CD4-positive, alpha-beta T cell (primary cell): ENCODE measurements at regions of chr1 and their contacts with region 1.

Region 1: DNA sequence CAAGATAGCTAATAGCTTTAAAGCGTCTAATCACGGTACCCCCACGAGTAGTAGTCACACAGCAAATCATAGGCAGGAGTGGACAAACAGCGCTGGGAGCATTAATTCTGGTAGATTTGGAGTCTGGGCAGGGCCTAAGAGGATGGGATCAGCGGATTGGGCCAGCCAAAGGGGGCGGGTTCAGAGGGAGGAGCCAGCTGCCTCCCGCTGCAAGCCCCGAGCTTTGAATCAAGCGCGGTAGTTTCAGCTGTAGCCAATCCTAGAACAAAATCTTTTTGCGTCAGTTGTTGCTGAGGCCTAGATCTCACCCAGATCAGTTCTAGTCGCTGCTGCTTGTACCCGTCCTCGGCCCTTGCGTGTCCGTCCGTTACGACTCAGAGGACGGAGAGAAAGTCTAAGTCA is 576 bp upstream of the NASP start:
- DNase-seq: peak; percentile 88 to 98 (median 92)
- ATAC-seq: peak; percentile 74
- H3K4me3 ChIP-seq: peak overlapping the region; percentile 95
- H3K4me3 Mint-ChIP-seq: peak overlapping the region; percentile 94
- H3K27ac ChIP-seq: peak overlapping the region; percentile 94 to 95
- H3K27ac Mint-ChIP-seq: peak overlapping the region; percentile 93
- H3K4me1 ChIP-seq: peaks cover 36% of the 10 kb centered on the region
- H3K4me1 Mint-ChIP-seq: peaks cover 36% of the 10 kb centered on the region
- H3K27me3 ChIP-seq: no peaks in the 10 kb centered on the region
- H3K27me3 Mint-ChIP-seq: no peaks in the 10 kb centered on the region
- CTCF ChIP-seq: no peak

Region 2: GRCh38 chr1:44714944-44715571 is 868.2 kb before region 1 on chr1:
- CTCF ChIA-PET with region 1: no interaction called
- POLR2A ChIA-PET with region 1: no interaction called
- intact Hi-C with region 1: loop called in 1 of 2 experiments (anchors 10 kb)
- DNase-seq: peak; percentile 48 to 88 (median 56)
- ATAC-seq: peak; percentile 93
- H3K4me3 ChIP-seq: peak overlapping the region; percentile 20
- H3K4me3 Mint-ChIP-seq: peak overlapping the region; percentile 69
- H3K27ac ChIP-seq: no peak overlapping the region
- H3K27ac Mint-ChIP-seq: peak overlapping the region; percentile 78
- H3K4me1 ChIP-seq: peaks cover 44% of the 10 kb centered on the region
- H3K4me1 Mint-ChIP-seq: peaks cover 44% of the 10 kb centered on the region
- H3K27me3 ChIP-seq: no peaks in the 10 kb centered on the region
- H3K27me3 Mint-ChIP-seq: no peaks in the 10 kb centered on the region
- CTCF ChIP-seq: peak; percentile 98

Region 3: DNA sequence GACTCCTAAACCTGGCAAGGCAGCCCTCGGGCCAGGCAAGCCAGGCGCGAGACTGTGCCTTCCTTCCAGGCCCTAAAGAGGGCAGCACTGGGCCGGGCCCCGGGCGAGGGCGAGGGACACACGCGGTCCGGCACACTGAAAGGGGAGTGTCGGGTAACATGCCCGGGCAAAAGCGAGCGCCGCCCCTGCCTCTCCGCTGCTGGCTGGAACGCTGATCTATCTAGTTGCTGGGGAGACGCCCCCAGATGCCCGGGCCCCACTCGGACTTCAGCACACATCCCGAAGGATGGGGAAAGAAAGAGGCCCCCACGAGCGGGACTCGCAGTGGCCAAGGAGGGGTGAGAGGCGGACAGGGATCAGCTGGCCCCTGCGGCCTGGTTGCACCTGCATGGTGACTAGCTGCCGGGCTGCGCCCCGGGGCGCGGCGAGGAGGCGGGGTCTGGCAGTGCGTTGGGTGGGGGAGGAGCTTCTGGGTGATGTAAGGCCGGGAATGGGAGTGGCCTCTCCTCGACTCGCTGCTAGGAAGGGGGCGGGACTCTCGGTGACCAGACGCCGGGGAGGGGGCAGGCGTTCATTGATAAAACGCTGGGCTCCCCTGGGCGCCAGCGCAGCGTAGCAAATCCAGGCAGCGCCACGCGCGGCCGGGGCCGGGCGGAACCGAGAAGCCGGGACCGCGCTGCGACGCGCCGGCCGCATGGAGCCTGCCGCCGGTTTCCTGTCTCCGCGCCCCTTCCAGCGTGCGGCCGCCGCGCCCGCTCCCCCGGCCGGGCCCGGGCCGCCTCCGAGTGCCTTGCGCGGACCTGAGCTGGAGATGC is 783.3 kb before region 1 on chr1 and contains the start of gene PLK3:
- CTCF ChIA-PET with region 1: no interaction called
- POLR2A ChIA-PET with region 1: interaction called, 4 read pairs
- intact Hi-C with region 1: loop called (anchors 10 kb)
- DNase-seq: peak; percentile 97 to 100 (median 98)
- ATAC-seq: peak; percentile 77
- H3K4me3 ChIP-seq: peak within 1 kb of the TSS; percentile 99
- H3K4me3 Mint-ChIP-seq: peak within 1 kb of the TSS; percentile 99
- H3K27ac ChIP-seq: peak within 1 kb of the TSS; percentile 88 to 98
- H3K27ac Mint-ChIP-seq: peak within 1 kb of the TSS; percentile 86
- H3K4me1 ChIP-seq: peaks cover 48% of the 10 kb centered on the region
- H3K4me1 Mint-ChIP-seq: peaks cover 39% of the 10 kb centered on the region
- H3K27me3 ChIP-seq: no peaks in the 10 kb centered on the region
- H3K27me3 Mint-ChIP-seq: no peaks in the 10 kb centered on the region
- CTCF ChIP-seq: peak; percentile 79
- total RNA-seq, gene PLK3: 794 TPM

Region 4: GRCh38 chr1:45499415-45499769 is 83.9 kb before region 1 on chr1:
- CTCF ChIA-PET with region 1: no interaction called
- POLR2A ChIA-PET with region 1: interaction called, 24 read pairs
- intact Hi-C with region 1: no loop called
- DNase-seq: peak in 1 of 14 experiments; percentile 23
- ATAC-seq: no peak
- H3K4me3 ChIP-seq: peak overlapping the region; percentile 80
- H3K4me3 Mint-ChIP-seq: peak overlapping the region; percentile 96
- H3K27ac ChIP-seq: peak overlapping the region; percentile 0 to 53
- H3K27ac Mint-ChIP-seq: peak overlapping the region; percentile 83
- H3K4me1 ChIP-seq: peaks cover 24% of the 10 kb centered on the region
- H3K4me1 Mint-ChIP-seq: peaks cover 36% of the 10 kb centered on the region
- H3K27me3 ChIP-seq: no peaks in the 10 kb centered on the region
- H3K27me3 Mint-ChIP-seq: no peaks in the 10 kb centered on the region
- CTCF ChIP-seq: no peak

Region 5: GRCh38 chr1:45550401-45551351 is 32.6 kb before region 1 on chr1 and contains the start of gene AKR1A1:
- CTCF ChIA-PET with region 1: no interaction called
- POLR2A ChIA-PET with region 1: interaction called, 15 read pairs
- intact Hi-C with region 1: loop called in 1 of 2 experiments (anchors 2 kb)
- DNase-seq: peak; percentile 70 to 94 (median 84)
- ATAC-seq: peak; percentile 95
- H3K4me3 ChIP-seq: peak within 1 kb of the TSS; percentile 73
- H3K4me3 Mint-ChIP-seq: peak within 1 kb of the TSS; percentile 98
- H3K27ac ChIP-seq: peak within 1 kb of the TSS; percentile 85 to 90
- H3K27ac Mint-ChIP-seq: peak within 1 kb of the TSS; percentile 89
- H3K4me1 ChIP-seq: peaks cover 27% of the 10 kb centered on the region
- H3K4me1 Mint-ChIP-seq: peaks cover 26% of the 10 kb centered on the region
- H3K27me3 ChIP-seq: no peaks in the 10 kb centered on the region
- H3K27me3 Mint-ChIP-seq: no peaks in the 10 kb centered on the region
- CTCF ChIP-seq: no peak
- total RNA-seq, gene AKR1A1: 25.3 to 31.0 TPM

Region 6: GRCh38 chr1:45686317-45687013 is 103.2 kb after region 1 on chr1 and contains the start of gene GPBP1L1:
- CTCF ChIA-PET with region 1: interaction called, 6 read pairs
- POLR2A ChIA-PET with region 1: interaction called, 65 read pairs
- intact Hi-C with region 1: loop called (anchors 1 to 2 kb)
- DNase-seq: peak; percentile 96 to 99 (median 98)
- ATAC-seq: peak; percentile 68
- H3K4me3 ChIP-seq: peak within 1 kb of the TSS; percentile 95
- H3K4me3 Mint-ChIP-seq: peak within 1 kb of the TSS; percentile 99
- H3K27ac ChIP-seq: peak within 1 kb of the TSS; percentile 97
- H3K27ac Mint-ChIP-seq: peak within 1 kb of the TSS; percentile 100
- H3K4me1 ChIP-seq: peaks cover 44% of the 10 kb centered on the region
- H3K4me1 Mint-ChIP-seq: peaks cover 51% of the 10 kb centered on the region
- H3K27me3 ChIP-seq: no peaks in the 10 kb centered on the region
- H3K27me3 Mint-ChIP-seq: no peaks in the 10 kb centered on the region
- CTCF ChIP-seq: no peak
- total RNA-seq, gene GPBP1L1: 116 to 125 TPM

Region 7: DNA sequence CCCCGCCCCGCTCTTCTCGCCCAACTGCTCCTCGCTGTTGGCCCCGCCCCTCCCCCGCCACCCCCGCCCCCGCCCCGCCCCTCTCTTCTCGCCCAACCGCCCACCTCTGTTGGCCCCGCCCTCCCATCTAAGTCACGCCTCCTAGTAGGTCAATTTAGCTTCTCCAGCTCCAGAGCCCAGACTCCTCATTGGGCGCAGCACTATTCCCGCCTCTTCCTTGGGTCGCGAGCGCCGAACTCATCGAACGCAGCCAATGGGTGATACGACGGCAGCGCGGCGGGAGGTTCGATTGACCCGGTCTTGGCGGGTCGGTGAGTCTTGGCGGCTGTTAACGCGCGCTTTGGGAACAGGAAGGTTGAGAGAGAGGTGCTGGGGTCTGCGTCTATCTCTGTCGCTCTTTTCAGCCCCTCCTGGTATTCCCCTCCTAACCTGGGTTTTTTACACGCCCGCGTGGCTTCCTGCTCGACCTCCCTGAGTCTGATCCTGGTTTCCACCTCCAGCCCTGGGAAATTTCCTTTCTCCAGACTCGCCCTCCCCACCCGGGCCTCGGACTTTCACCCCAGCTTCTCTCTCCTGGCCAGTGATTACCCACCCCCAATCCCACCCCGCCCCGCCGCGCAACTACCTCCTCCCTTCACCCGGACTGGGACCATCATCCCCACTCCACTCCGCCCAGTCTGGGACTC is 664.3 kb after region 1 on chr1 and contains the start of gene RAD54L:
- CTCF ChIA-PET with region 1: no interaction called
- POLR2A ChIA-PET with region 1: interaction called, 3 read pairs
- intact Hi-C with region 1: loop called in 1 of 2 experiments (anchors 2 kb)
- DNase-seq: peak; percentile 92 to 99 (median 94)
- ATAC-seq: peak; percentile 96
- H3K4me3 ChIP-seq: peak within 1 kb of the TSS; percentile 83
- H3K4me3 Mint-ChIP-seq: peak within 1 kb of the TSS; percentile 89
- H3K27ac ChIP-seq: no peak within 1 kb of the TSS
- H3K27ac Mint-ChIP-seq: peak within 1 kb of the TSS; percentile 36
- H3K4me1 ChIP-seq: peaks cover 21% of the 10 kb centered on the region
- H3K4me1 Mint-ChIP-seq: peaks cover 26% of the 10 kb centered on the region
- H3K27me3 ChIP-seq: no peaks in the 10 kb centered on the region
- H3K27me3 Mint-ChIP-seq: no peaks in the 10 kb centered on the region
- CTCF ChIP-seq: no peak
- total RNA-seq, gene RAD54L: 0.33 to 1.0 TPM